ENCODE measurements at regions of chr9 and their contacts with region 1.

Region 1: GRCh38 chr9:120730661-120731514 is 16.6 kb upstream of the MEGF9 start:
- DNase-seq: no peak
- H3K4me3 ChIP-seq: no peak overlapping the region
- H3K27ac ChIP-seq: no peak overlapping the region
- H3K4me1 ChIP-seq: peaks cover 0 to 14% of the 10 kb centered on the region in 2 experiments; a peak in 1 of 4 replicates
- H3K27me3 ChIP-seq: no peaks in the 10 kb centered on the region
- CTCF ChIP-seq: no peak
- EP300 ChIP-seq: no peak
- RAD21 ChIP-seq: no peak

Region 2: DNA sequence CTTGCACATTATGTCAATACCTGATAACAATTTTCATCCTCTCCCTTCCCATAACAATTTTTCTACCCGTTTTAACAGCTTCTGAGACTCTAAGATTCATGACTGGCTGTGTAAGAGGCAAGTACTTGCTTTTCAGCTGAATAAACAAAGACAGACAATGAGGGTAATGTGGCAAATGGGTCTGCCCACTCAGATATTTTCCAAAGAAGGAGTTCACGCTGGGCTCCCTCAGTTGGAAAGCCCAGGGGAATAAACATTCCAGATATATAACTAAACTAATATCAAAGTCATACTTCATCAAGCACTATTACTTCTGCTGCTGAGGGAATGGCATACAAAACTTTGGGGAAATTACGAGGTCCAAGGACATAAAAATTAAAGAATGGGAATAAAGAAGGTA is 41.0 kb before region 1 on chr9:
- CTCF ChIA-PET with region 1: no interaction called
- POLR2A ChIA-PET with region 1: no interaction called
- DNase-seq: no peak
- H3K4me3 ChIP-seq: no peak overlapping the region
- H3K27ac ChIP-seq: no peak overlapping the region
- H3K4me1 ChIP-seq: peaks cover 0 to 18% of the 10 kb centered on the region in 2 experiments; a peak in 3 of 4 replicates
- H3K27me3 ChIP-seq: no peaks in the 10 kb centered on the region
- CTCF ChIP-seq: no peak
- EP300 ChIP-seq: no peak
- RAD21 ChIP-seq: no peak

Region 3: GRCh38 chr9:120702071-120702470 is 28.8 kb before region 1 on chr9:
- CTCF ChIA-PET with region 1: no interaction called
- POLR2A ChIA-PET with region 1: no interaction called
- DNase-seq: no peak
- H3K4me3 ChIP-seq: no peak overlapping the region
- H3K27ac ChIP-seq: peak overlapping the region in 1 of 2 experiments; percentile 39; a peak in 1 of 4 replicates
- H3K4me1 ChIP-seq: peaks cover 9 to 18% of the 10 kb centered on the region in 2 experiments
- H3K27me3 ChIP-seq: no peaks in the 10 kb centered on the region
- CTCF ChIP-seq: no peak
- EP300 ChIP-seq: peak; percentile 36 to 73; a peak in 2 of 4 replicates
- RAD21 ChIP-seq: no peak

Region 4: DNA sequence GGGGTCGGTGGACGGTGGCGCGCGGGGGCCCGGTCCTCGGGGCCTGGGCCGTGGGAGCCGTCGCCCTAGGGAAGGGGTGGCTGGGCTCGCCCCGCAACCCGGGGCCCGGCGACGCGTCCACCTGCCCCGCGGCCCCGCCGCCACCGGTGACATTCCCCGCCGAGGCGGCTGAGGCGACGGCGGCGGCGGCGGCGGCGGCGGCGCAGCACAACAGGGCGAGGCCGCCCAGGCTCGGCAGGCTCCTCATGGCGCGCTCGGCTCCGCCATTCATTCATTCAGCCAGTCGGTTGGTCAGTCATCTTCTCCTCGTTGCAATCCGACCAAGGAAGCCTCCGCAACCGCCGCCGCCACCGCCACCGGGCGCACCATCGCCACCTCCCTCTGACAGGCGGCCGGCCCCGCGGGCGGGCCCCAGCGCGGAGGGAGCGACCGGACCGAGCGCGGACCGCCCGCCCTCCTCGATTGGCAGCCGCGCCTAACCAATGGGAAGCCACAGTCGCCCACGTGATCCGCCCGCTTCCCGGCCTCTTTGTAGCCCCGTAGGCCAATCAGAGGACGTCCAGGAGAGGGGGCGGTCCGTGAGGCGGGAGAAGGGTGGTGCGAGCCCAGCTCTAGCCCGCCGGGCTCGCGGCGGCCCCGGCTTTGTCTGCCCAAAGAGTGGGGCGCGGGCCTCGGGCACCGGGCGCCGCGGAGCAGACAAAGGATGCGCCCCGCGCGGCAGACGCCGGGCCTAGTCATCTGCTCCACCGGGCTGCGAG is 16.6 kb before region 1 on chr9 and contains the start of gene MEGF9:
- CTCF ChIA-PET with region 1: interaction called, 3 read pairs
- POLR2A ChIA-PET with region 1: interaction called, 15 read pairs
- DNase-seq: peak; percentile 99
- H3K4me3 ChIP-seq: peak within 1 kb of the TSS; percentile 78 to 84
- H3K27ac ChIP-seq: peak within 1 kb of the TSS; percentile 47 to 86
- H3K4me1 ChIP-seq: peaks cover 11 to 13% of the 10 kb centered on the region in 2 experiments; a peak in 3 of 4 replicates
- H3K27me3 ChIP-seq: no peaks in the 10 kb centered on the region
- CTCF ChIP-seq: no peak
- EP300 ChIP-seq: no peak
- RAD21 ChIP-seq: no peak
- polyA plus RNA-seq, gene MEGF9: 1.8 and 2.2 TPM in 2 replicates

Region 5: GRCh38 chr9:120742951-120743416 is 12.1 kb after region 1 on chr9:
- CTCF ChIA-PET with region 1: interaction called, 10 read pairs
- POLR2A ChIA-PET with region 1: no interaction called
- DNase-seq: peak; percentile 71
- H3K4me3 ChIP-seq: no peak overlapping the region; a peak in 1 of 4 replicates
- H3K27ac ChIP-seq: no peak overlapping the region
- H3K4me1 ChIP-seq: no peaks in the 10 kb centered on the region
- H3K27me3 ChIP-seq: no peaks in the 10 kb centered on the region
- CTCF ChIP-seq: peak; percentile 72
- EP300 ChIP-seq: no peak
- RAD21 ChIP-seq: peak; percentile 72

Measured in SK-N-SH (cell line).